ENCODE measurements at regions of chr5 and their contacts with region 1.

Region 1: DNA sequence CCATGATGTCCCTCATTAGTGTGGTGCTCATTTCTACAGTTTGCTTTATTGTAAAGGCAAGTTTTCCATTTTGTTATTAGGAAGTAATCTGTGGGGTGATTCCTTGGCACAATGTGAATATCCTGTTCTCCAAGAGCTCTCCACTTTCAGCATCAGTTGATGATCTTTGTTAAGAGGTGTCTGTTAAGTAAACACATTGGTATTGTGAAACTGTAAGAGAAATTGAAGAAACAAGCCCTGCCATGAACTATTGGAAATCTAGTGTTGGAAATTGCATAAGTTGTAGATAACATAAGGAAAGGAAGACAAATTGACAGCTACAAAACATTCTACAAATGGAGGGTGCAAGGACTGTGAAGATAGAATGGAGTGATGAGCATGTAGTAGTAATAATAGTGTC is 17.2 kb downstream of the RNF14 start:
- DNase-seq: no peak
- H3K4me3 ChIP-seq: no peak overlapping the region
- H3K27me3 ChIP-seq: no peaks in the 10 kb centered on the region
- CTCF ChIP-seq: no peak

Region 2: DNA sequence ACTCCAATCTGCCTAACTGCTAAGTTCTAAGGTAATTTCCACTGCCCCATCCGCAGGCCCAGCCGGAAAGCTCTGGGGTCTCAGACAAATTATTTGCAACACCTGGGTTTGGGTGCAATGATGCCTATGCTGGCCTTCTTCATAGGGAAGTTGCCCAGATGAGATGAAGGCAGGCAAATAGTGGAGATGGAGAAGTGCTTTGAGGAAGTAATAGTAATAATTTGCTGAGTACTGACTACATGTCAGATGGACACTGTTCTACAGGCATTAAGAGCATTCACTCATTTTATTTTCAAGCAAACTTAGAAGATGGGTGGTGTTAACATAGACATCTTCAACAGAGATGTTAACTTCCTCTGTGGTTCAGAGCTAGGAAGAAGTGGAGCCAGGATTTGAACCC is 31.9 kb before region 1 on chr5:
- CTCF ChIA-PET with region 1: no interaction called
- POLR2A ChIA-PET with region 1: no interaction called
- DNase-seq: no peak
- H3K4me3 ChIP-seq: no peak overlapping the region
- H3K27me3 ChIP-seq: peaks cover 2% of the 10 kb centered on the region; the same call in 1 of the 2 replicates
- CTCF ChIP-seq: no peak

Region 3: DNA sequence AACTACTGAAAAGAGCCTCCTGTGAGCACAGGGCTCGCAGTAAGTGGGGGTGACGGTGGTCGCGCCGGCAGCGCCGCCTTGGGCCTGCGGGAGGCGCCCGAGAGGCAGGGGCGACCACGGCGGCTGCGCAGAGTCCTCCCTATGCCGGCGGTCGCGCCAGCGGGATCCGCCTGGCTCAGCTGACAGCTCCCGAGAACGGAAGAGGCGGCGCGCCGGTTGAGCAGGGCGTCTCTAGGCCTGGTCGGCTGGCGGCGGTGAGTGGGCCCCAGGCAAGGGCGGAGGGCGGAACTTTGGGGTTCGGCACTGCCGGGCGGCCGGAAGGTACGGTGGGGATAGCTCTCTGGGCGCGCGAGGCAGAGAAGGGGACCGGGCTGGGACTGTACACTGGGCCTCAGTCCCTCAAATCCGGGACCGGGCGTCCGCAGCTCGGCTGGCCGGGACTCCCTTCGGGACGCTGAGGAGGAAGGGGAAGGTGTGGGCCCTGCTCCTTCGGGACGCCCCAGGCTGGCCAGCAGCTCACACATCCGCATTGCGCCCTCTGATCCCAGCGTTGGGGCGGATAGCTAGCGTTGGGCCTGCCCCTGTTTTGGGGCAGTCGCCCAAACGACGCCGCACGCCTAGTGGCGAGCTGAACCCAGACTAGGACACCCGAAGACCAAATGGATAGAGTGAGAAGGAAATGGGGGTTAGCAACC is 17.0 kb before region 1 on chr5 and contains the start of gene RNF14:
- CTCF ChIA-PET with region 1: interaction called, 18 read pairs
- POLR2A ChIA-PET with region 1: no interaction called
- DNase-seq: peak; percentile 59
- H3K4me3 ChIP-seq: peak within 1 kb of the TSS; percentile 69
- H3K27me3 ChIP-seq: no peaks in the 10 kb centered on the region
- CTCF ChIP-seq: peak; percentile 83
- polyA plus RNA-seq, gene RNF14: 27.2 and 33.1 TPM in 2 replicates

Region 4: GRCh38 chr5:142000703-142001484 is 14.8 kb after region 1 on chr5:
- CTCF ChIA-PET with region 1: no interaction called
- POLR2A ChIA-PET with region 1: no interaction called
- DNase-seq: no peak
- H3K4me3 ChIP-seq: no peak overlapping the region
- H3K27me3 ChIP-seq: no peaks in the 10 kb centered on the region
- CTCF ChIP-seq: no peak

Measured in BJ (cell line).